ENCODE measurements at regions of chr17 and their contacts with region 1.

Region 1: GRCh38 chr17:78341559-78342448 is 18.1 kb downstream of the SOCS3 start:
- DNase-seq: peak; percentile 92
- ATAC-seq: peak; percentile 82

Region 2: DNA sequence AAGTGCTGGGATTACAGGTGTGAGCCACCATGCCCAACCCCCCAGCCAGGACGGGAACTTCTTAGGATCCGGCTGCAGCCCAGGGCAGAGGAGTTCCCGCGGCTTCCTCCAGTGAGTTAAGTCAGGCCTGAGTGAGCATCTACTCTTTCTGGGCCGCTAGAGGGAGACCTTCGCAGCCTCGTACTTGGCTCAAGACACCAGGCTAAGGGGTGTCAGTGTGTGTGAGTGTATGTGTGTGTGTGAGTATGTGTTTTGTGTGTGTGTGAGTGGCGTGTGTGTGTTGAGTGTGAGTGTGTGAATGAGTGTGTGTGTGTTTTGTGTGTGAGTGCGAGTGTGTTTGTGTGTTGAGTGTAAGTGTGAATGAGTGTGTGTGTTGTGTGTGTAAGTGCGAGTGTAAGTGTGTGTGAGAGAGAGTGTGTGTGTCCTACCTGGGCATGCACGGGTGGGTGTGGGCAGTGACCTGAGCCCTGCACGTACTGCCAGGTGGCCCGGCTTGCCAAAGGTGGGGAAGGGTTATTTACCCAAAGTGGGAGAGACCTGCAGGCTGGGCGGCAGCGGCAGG is 51.9 kb before region 1 on chr17:
- intact Hi-C with region 1: loop called (anchors 5 kb)
- DNase-seq: peak; percentile 85
- ATAC-seq: peak; percentile 90

Region 3: GRCh38 chr17:78324391-78325075 is 17.3 kb before region 1 on chr17:
- intact Hi-C with region 1: loop called (anchors 1 kb)
- DNase-seq: peak; percentile 94
- ATAC-seq: peak; percentile 81

Measured in Right ventricle myocardium inferior (tissue), 1 donor.